ENCODE measurements at regions of chr1 and their contacts with region 1.

Region 1: DNA sequence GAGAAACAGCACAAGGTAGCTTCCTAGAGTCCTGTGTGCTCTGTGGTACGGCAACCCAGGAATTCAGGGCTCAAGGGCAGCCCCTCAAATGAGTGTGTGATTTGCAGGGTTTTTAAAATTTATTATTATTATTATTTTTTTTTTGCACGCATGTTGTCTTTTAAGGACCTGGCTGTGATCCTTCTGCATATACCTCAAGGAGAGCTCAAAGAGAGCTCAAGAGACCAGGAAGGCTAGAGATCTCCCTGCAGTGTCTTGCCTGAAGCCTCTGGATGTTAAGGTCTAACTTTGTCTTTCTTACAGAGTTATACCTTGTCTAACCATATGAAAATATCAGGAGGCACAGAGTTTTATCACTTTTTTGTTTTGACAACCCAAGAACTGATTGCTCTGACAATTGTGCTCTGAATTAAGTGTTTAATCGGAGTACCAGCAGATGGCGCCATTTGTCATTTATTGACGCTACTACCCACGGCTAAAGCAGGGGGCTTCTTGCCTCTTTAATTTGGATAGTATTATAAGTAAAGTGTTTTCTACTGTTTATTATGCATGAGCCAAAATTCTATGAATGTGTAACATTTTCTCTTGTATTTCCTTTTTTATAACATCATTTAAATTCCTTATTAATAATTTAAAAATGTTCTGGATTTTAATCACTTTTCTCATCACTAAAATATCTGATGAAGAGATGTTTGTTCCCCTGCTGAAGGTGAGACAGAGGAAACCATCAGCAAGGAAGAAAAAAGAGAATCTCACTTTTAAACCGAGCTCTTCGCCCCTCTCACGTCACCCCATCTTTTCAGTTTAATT is 35.8 kb upstream of the LMO4 start:
- DNase-seq: peak in 31 of 35 experiments; percentile 2 to 82 (median 45)
- ATAC-seq: peak in 2 of 4 experiments; percentile 49 to 50
- H3K4me3 ChIP-seq: no peak overlapping the region
- H3K4me3 Mint-ChIP-seq: no peak overlapping the region
- H3K27ac ChIP-seq: no peak overlapping the region
- H3K27ac Mint-ChIP-seq: no peak overlapping the region
- H3K4me1 ChIP-seq: no peaks in the 10 kb centered on the region
- H3K4me1 Mint-ChIP-seq: no peaks in the 10 kb centered on the region
- H3K27me3 ChIP-seq: peaks cover 0 to 5% of the 10 kb centered on the region in 2 experiments
- H3K27me3 Mint-ChIP-seq: peaks cover 5 to 11% of the 10 kb centered on the region in 2 donors

Region 2: DNA sequence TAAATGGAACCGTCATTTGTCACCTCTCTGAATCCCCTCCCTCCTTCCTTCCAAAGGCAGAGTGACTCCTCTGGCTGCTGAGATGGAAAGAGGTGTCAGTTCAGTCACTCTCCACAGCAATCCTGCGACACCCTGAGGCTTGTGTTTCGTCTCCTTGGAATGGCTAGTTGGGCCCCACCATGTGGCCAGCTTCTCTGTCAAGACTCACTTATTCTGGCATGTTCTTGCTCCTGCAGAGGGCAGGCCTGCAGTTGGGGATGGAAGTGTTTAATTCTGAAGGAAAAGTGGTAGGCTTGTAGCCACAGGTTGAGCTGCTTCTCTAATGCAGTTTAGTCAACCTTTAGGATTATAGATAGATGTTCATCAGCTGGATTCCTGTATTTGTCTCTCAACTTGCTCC is 185.3 kb after region 1 on chr1:
- CTCF ChIA-PET with region 1: interaction called in 1 of 2 experiments, 13 read pairs
- POLR2A ChIA-PET with region 1: no interaction called
- DNase-seq: no peak
- ATAC-seq: no peak
- H3K4me3 ChIP-seq: no peak overlapping the region
- H3K4me3 Mint-ChIP-seq: no peak overlapping the region
- H3K27ac ChIP-seq: no peak overlapping the region
- H3K27ac Mint-ChIP-seq: no peak overlapping the region
- H3K4me1 ChIP-seq: no peaks in the 10 kb centered on the region
- H3K4me1 Mint-ChIP-seq: no peaks in the 10 kb centered on the region
- H3K27me3 ChIP-seq: no peaks in the 10 kb centered on the region
- H3K27me3 Mint-ChIP-seq: no peaks in the 10 kb centered on the region

Region 3: GRCh38 chr1:87953732-87954344 is 660.9 kb after region 1 on chr1:
- CTCF ChIA-PET with region 1: interaction called, 10 to 27 read pairs
- POLR2A ChIA-PET with region 1: no interaction called
- DNase-seq: peak in 34 of 35 experiments; percentile 6 to 68 (median 28)
- ATAC-seq: peak in 3 of 4 experiments; percentile 59 to 65 (median 60)
- H3K4me3 ChIP-seq: no peak overlapping the region
- H3K4me3 Mint-ChIP-seq: no peak overlapping the region
- H3K27ac ChIP-seq: no peak overlapping the region
- H3K27ac Mint-ChIP-seq: no peak overlapping the region
- H3K4me1 ChIP-seq: no peaks in the 10 kb centered on the region
- H3K4me1 Mint-ChIP-seq: no peaks in the 10 kb centered on the region
- H3K27me3 ChIP-seq: no peaks in the 10 kb centered on the region
- H3K27me3 Mint-ChIP-seq: peaks cover 12 to 20% of the 10 kb centered on the region in 2 donors